ENCODE measurements at regions of chr5 and their contacts with region 1.

Region 1: GRCh38 chr5:102681407-102681983 is 73.6 kb upstream of the PAM start:
- DNase-seq: peak; percentile 44 to 62
- ATAC-seq: peak; percentile 86 to 88
- H3K4me3 ChIP-seq: no peak overlapping the region
- H3K27ac ChIP-seq: no peak overlapping the region
- H3K4me1 ChIP-seq: no peaks in the 10 kb centered on the region
- H3K27me3 ChIP-seq: no peaks in the 10 kb centered on the region
- CTCF ChIP-seq: peak; percentile 54 to 79 (median 73)
- POLR2A ChIP-seq: no peak

Region 2: GRCh38 chr5:102583276-102584124 is 98.0 kb before region 1 on chr5:
- in situ Hi-C with region 1: no loop called
- intact Hi-C with region 1: loop called (anchors 10 kb)
- DNase-seq: no peak
- ATAC-seq: no peak
- H3K4me3 ChIP-seq: no peak overlapping the region
- H3K27ac ChIP-seq: no peak overlapping the region
- H3K4me1 ChIP-seq: no peaks in the 10 kb centered on the region
- H3K27me3 ChIP-seq: no peaks in the 10 kb centered on the region
- CTCF ChIP-seq: peak in 4 of 5 experiments; percentile 16 to 42 (median 37)
- POLR2A ChIP-seq: no peak

Region 3: DNA sequence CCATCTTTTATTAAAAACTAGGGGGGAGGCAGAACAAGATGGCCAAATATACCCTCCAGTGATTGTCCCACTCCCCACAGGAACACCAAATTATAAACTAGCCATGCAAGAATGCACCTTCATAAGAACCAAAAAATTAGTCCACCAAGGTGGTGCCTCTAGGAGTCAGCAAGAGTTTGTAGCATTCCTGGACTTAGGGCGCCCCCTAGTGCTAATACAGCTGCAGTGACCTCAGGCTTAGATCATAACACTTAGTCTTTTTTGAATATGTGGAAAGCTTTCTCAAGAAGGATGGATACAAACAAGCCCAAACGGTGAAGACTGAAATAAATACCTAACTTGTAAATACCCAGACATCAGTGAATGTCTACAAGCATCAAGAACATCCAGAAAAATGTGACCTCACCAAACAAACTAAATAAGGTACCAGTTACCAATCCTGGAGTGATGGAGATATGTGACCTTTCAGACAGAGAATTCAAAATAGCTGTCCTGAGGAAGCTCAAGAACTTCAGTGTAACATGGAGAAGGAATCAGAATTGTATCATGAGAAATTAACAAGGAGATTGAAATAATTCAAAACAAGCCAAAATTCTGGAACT is 457.9 kb after region 1 on chr5:
- in situ Hi-C with region 1: loop called in 2 of 4 experiments (anchors 25 kb)
- intact Hi-C with region 1: no loop called
- DNase-seq: peak; percentile 29 to 60
- ATAC-seq: peak; percentile 60 to 87
- H3K4me3 ChIP-seq: no peak overlapping the region
- H3K27ac ChIP-seq: no peak overlapping the region
- H3K4me1 ChIP-seq: no peaks in the 10 kb centered on the region
- H3K27me3 ChIP-seq: no peaks in the 10 kb centered on the region
- CTCF ChIP-seq: peak; percentile 73 to 89 (median 80)
- POLR2A ChIP-seq: no peak

Measured in gastrocnemius medialis (tissue), 4 donors.